ENCODE measurements at regions of chr14 and their contacts with region 1.

Region 1: GRCh38 chr14:74860906-74861733 is 14.8 kb downstream of the PROX2 start:
- DNase-seq: peak; percentile 93
- ATAC-seq: peak; percentile 94
- H3K4me3 Mint-ChIP-seq: no peak overlapping the region
- H3K27ac Mint-ChIP-seq: no peak overlapping the region
- H3K4me1 Mint-ChIP-seq: peaks cover under 1% of the 10 kb centered on the region
- H3K27me3 Mint-ChIP-seq: no peaks in the 10 kb centered on the region

Region 2: DNA sequence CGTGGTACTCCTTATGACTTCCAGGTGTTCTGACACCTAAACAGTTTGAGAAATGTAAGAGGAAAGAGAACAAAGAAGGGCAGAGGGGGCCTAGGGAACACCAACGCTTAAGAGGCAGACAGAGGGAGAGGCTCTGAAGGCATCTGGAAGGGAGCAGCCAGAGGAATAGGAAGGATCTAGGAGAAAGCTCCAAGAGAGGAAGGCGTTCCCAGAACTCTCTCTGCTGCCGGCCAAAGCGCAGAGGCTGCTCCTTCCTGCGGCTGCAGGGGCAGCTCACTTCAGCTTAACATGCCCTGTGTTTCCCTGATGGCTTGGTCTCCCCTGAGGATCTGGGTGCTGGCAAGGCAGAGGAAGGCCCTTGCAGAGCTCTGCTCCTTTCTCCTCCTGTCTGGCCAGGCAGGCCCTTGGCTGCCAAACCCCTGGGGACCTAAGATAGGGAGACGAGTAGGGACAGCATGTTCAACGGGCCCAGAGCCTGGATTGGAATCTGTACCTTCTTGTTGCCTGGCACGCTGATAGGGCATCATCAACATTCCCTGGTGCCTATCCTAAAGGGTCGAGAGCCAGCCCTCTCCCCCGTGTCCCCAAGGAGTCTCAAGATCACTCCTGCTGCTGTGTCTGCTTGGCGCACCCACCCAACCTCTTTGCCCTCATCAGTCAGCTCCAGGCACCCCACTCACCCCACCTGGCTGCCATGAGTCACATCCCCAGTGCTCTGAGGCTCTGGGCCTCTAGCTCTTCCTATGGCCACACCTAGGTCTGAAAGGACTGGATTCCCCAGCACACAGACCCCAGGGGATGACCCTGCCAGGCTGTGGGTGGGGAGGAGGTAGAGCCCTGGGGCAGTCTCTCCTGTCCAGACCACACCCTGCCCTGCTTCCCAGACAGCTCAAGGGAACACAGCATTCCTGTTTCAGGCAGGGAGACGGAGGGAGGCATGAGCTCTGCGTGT is 294.7 kb before region 1 on chr14:
- CTCF ChIA-PET with region 1: no interaction called
- DNase-seq: no peak
- ATAC-seq: peak; percentile 12
- H3K4me3 Mint-ChIP-seq: no peak overlapping the region
- H3K27ac Mint-ChIP-seq: no peak overlapping the region
- H3K4me1 Mint-ChIP-seq: peaks cover 4% of the 10 kb centered on the region
- H3K27me3 Mint-ChIP-seq: peaks cover 63% of the 10 kb centered on the region

Region 3: DNA sequence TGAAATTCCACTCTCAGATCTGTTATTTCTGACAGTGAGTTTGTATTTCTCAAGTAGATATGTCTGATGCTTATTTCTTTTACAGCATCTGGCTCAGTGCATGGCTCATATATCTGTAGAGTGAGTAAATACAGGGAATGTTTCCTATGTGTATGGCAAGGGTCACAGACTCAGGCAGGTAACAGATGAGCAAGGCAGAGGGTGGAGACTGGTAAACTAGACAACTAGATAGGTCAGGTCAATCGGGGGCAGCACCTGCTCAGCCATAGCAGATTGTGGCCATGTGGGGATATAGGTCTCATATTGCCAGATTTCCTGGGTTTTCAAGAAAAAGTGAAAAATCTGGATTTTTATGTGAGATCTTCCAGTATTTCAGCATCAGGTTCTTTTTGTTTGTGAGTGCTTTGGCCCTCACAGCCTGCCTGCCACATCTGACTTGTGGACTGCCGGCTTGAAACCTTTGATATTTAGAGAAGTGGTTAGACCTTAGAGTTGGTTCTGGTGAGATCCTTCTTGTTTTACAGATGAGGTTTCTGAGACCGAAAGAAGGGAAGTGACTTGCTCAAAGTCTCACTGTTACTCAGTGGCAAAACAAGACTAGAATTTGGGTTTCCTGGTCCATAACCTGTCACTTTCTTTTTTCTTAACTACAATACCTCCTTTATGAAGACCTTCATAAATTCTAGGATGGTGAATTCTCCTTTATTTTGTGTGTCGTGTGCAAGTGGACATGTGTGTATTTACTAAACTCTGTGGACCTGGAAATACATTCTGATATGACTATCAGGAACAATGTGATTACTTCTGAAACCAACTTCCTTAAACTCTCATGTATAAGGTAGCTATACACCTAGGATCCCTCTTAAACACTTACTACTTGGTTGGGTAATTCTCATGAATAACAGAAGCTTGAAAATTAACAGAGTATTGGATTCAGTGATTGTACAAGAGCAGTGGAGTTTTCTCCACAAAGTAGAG is 19.6 kb before region 1 on chr14:
- CTCF ChIA-PET with region 1: interaction called, 85 read pairs
- DNase-seq: peak; percentile 67
- ATAC-seq: peak; percentile 79
- H3K4me3 Mint-ChIP-seq: peak overlapping the region; percentile 27
- H3K27ac Mint-ChIP-seq: peak overlapping the region; percentile 84
- H3K4me1 Mint-ChIP-seq: peaks cover 56% of the 10 kb centered on the region
- H3K27me3 Mint-ChIP-seq: no peaks in the 10 kb centered on the region

Region 4: GRCh38 chr14:74846968-74847665 is 14.0 kb before region 1 on chr14:
- CTCF ChIA-PET with region 1: interaction called, 85 read pairs
- DNase-seq: no peak
- ATAC-seq: no peak
- H3K4me3 Mint-ChIP-seq: no peak overlapping the region
- H3K27ac Mint-ChIP-seq: no peak overlapping the region
- H3K4me1 Mint-ChIP-seq: peaks cover 5% of the 10 kb centered on the region
- H3K27me3 Mint-ChIP-seq: no peaks in the 10 kb centered on the region

Region 5: GRCh38 chr14:74881431-74882361 is 20.6 kb after region 1 on chr14 and contains the start of gene DLST:
- CTCF ChIA-PET with region 1: interaction called, 271 read pairs
- DNase-seq: peak; percentile 90
- ATAC-seq: peak; percentile 94
- H3K4me3 Mint-ChIP-seq: peak within 1 kb of the TSS; percentile 94
- H3K27ac Mint-ChIP-seq: peak within 1 kb of the TSS; percentile 92
- H3K4me1 Mint-ChIP-seq: peaks cover 59% of the 10 kb centered on the region
- H3K27me3 Mint-ChIP-seq: no peaks in the 10 kb centered on the region
- total RNA-seq, gene DLST: 106 to 119 TPM

Region 6: GRCh38 chr14:74905375-74906142 is 44.4 kb after region 1 on chr14:
- CTCF ChIA-PET with region 1: interaction called, 680 read pairs
- DNase-seq: peak; percentile 80
- ATAC-seq: peak; percentile 80
- H3K4me3 Mint-ChIP-seq: no peak overlapping the region
- H3K27ac Mint-ChIP-seq: peak overlapping the region; percentile 56
- H3K4me1 Mint-ChIP-seq: no peaks in the 10 kb centered on the region
- H3K27me3 Mint-ChIP-seq: no peaks in the 10 kb centered on the region

Region 7: DNA sequence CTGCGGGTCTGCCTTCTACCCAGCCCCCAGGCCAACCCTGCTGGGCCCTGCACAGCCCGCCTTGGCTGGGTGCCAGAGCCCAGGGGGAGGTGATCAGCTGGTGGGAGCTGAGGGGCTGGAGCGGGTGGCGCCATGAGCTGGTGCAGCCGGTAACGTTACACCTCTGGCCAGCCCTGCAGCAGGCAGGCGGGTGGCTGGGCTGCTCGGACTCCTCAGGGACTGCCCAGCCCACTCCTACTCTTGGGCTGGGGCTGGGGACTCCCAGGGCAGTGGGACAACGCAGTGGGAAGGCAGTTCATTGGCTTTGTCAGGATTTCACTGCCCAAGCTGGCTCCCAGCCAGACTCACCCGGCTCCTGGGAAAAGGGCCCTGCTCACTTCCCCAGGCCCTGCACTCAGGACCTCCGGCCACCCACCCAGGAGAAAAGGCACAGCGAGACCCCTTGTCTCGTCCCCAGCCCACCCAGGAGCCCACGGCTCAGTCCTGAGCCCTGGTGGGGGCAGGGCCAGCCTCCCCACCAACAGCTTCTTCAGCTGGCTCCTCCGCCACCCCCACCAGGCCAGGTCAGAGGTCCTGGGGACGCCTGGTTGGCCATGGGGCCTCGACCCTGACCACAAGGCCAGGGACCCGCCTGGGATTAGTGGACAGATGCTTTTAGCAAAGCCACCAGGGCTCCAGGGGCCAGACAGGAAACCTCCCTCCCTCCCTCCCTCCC is 93.3 kb after region 1 on chr14:
- CTCF ChIA-PET with region 1: no interaction called
- DNase-seq: no peak
- ATAC-seq: no peak
- H3K4me3 Mint-ChIP-seq: no peak overlapping the region
- H3K27ac Mint-ChIP-seq: no peak overlapping the region
- H3K4me1 Mint-ChIP-seq: no peaks in the 10 kb centered on the region
- H3K27me3 Mint-ChIP-seq: peaks cover 9% of the 10 kb centered on the region

Region 8: GRCh38 chr14:75022655-75023054 is 161.5 kb after region 1 on chr14:
- CTCF ChIA-PET with region 1: interaction called, 11 read pairs
- DNase-seq: no peak
- ATAC-seq: peak; percentile 45
- H3K4me3 Mint-ChIP-seq: no peak overlapping the region
- H3K27ac Mint-ChIP-seq: no peak overlapping the region
- H3K4me1 Mint-ChIP-seq: no peaks in the 10 kb centered on the region
- H3K27me3 Mint-ChIP-seq: no peaks in the 10 kb centered on the region

Region 9: GRCh38 chr14:75088574-75089373 is 227.7 kb after region 1 on chr14:
- CTCF ChIA-PET with region 1: interaction called, 25 read pairs
- DNase-seq: peak; percentile 57
- ATAC-seq: peak; percentile 66
- H3K4me3 Mint-ChIP-seq: no peak overlapping the region
- H3K27ac Mint-ChIP-seq: peak overlapping the region; percentile 40
- H3K4me1 Mint-ChIP-seq: no peaks in the 10 kb centered on the region
- H3K27me3 Mint-ChIP-seq: no peaks in the 10 kb centered on the region